ENCODE measurements at regions of chr3 and their contacts with region 1.

Region 1: DNA sequence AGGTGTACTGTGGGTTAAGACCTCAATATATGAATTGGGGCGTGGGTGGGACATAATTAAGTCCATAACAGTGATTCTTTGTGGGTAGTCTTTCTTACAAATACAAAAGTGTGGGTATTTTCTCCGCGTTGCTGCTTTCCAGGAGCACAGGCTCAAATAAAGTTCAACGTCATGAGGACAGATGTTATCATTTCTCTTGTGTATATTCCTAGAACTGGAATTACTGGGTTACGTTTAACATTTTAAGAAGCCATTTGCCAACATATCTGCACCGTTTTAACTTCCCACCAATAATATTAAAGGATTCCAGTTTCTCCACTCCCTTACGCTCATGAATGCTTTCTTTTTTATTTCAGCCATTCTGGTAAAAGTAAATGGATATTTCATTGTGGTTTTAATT is 39.6 kb downstream of the ZNF860 start:
- DNase-seq: no peak
- H3K4me3 ChIP-seq: no peak overlapping the region
- CTCF ChIP-seq: no peak
- POLR2A ChIP-seq: no peak

Region 2: DNA sequence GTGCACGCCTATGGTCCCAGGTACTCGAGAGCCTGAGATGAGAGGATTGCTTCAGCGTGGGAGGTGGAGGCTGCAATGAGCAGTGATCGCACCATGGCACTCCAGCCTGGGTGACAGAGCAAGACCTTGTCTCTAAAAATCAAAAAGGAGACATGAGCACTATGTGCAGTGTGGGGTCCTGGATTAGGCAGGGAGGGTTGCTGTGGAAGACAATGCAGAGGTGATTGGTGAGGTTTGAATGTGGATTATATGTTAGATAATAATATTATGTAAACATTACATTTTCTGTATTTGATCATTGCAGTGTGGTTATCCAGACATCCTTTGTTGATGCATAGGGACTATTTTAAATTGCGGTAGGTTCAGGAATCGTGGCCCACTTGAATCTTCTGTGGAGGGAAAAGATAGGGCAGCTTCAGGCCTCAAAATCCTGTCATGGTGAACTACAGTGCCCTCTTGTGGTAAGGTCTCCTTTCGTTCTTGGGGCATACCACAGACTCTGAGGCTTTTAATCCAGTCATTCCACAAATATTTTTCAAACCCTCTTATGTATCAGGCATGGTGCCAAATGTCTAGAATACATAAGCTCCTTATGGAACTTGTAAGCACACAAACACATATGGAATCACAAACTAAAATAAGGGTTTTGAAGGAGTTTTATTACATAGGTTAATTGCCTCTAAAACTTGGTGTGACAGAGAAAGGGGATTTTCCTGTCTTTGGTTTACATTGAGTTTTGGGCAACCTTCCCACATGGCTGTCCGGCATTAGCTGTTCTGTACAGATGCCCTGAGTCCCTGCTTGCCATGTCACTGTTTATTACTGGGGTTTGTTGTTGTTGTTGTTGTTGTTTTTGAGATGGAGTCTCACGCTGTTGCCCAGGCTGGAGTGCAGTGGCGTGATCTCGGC is 122.9 kb after region 1 on chr3:
- intact Hi-C with region 1: loop called (anchors 2 kb)
- DNase-seq: peak in 1 of 2 donors; percentile 39
- H3K4me3 ChIP-seq: no peak overlapping the region
- CTCF ChIP-seq: peak in 1 of 3 donors; percentile 39
- POLR2A ChIP-seq: no peak